Activated CD8-positive, alpha-beta T cell treated with anti-CD3 and anti-CD28 coated beads for 36 hours (primary cell): ENCODE measurements at regions of chr15 and their contacts with region 1.

Region 1: GRCh38 chr15:76973362-76973743 is 21.6 kb upstream of the PSTPIP1 start:
- DNase-seq: peak; percentile 86
- ATAC-seq: peak; percentile 82
- H3K4me3 Mint-ChIP-seq: no peak overlapping the region
- H3K27ac Mint-ChIP-seq: peak overlapping the region; percentile 36
- H3K4me1 Mint-ChIP-seq: peaks cover 24% of the 10 kb centered on the region
- H3K27me3 Mint-ChIP-seq: no peaks in the 10 kb centered on the region
- CTCF ChIP-seq: peak; percentile 90

Region 2: GRCh38 chr15:76954744-76955143 is 18.6 kb before region 1 on chr15:
- CTCF ChIA-PET with region 1: interaction called, 17 read pairs
- POLR2A ChIA-PET with region 1: interaction called, 3 read pairs
- intact Hi-C with region 1: no loop called
- DNase-seq: no peak
- ATAC-seq: no peak
- H3K4me3 Mint-ChIP-seq: no peak overlapping the region
- H3K27ac Mint-ChIP-seq: no peak overlapping the region
- H3K4me1 Mint-ChIP-seq: peaks cover 9% of the 10 kb centered on the region
- H3K27me3 Mint-ChIP-seq: no peaks in the 10 kb centered on the region
- CTCF ChIP-seq: no peak

Region 3: DNA sequence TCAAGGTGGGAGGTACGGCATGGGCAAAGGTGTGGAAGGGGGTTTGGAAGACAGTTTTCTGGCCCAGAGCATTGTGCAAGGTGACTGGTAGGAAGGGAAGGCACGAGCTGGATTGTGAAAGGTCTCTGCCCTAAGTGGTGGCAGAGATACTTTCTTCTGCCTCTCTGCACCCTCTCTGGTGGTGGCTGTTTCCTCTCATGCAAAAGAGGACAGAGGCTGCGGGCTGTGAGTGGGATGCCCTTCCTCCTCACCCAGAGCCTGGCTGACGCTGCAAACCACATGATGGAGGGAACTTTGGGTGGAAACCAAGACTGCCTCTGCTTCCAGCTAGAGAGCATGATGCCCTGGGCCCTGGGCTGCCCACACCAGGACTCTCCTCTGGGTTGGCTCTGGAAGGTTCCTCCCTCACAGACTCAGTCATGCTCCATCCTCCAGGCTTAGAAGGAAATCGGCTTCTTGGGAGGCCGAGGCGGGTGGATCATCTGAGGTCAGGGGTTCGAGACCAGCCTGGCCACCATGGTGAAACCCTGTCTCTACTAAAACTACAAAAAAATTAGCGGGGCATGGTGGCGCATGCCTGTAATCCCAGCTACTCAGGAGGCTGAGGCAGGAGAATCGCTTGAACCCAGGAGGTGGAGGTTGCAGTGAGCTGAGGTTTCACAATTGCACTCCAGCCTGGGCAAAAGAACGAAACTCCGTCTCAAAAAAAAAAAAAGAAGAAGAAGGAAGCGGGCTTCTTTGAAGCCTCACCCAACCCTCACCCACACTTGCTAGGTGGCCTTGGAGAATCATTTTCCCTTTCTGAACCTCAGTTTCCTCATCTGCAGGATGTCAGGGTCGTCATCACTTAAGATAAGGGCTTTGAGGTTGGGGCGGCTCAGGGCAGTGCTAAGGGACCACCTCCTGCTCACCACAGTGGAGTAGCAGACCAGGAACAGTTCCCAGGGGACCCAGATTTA is 29.9 kb after region 1 on chr15:
- CTCF ChIA-PET with region 1: interaction called, 42 read pairs
- POLR2A ChIA-PET with region 1: interaction called, 4 read pairs
- intact Hi-C with region 1: no loop called
- DNase-seq: peak; percentile 91
- ATAC-seq: peak; percentile 81
- H3K4me3 Mint-ChIP-seq: peak overlapping the region; percentile 59
- H3K27ac Mint-ChIP-seq: peak overlapping the region; percentile 93
- H3K4me1 Mint-ChIP-seq: peaks cover 85% of the 10 kb centered on the region
- H3K27me3 Mint-ChIP-seq: no peaks in the 10 kb centered on the region
- CTCF ChIP-seq: no peak

Region 4: DNA sequence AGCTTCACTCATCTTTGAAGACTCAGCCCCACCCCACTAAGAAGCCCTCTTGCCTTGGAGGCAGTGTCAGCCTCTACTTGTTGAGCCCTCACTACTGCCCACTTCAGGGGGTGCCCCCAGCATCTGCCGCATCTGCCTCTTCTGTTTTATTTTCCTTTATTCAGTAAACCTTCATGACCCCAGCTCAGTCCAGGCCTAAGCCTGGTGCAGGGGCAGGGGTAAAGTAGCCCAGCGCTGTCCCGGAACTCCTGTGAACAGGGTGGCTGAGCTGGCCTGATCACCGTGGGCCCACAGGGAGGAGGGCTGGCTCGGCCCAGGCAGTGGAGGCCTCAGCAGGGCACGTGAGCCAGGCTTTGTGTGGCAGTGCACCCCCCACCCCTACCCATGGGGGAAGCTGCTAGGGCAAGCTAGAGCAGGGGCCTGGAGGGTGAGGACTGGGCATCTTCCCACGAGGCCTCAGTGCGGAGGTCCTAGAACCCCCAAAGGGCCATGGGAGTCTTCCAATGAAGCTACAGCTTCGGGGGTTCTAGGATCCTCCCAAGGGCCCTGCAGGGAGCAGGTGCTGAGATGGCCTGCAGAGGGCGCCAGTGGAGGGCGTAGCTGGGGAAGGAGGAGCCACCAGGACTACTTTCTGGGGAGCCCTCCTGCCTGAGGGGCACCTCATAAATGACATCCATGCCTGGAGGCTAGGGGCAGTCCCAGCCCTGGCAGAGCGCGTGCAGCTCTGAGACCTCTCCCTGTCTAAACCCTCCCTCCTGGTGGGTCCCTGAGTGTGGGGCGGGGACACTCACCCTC is 61.5 kb after region 1 on chr15:
- CTCF ChIA-PET with region 1: interaction called, 51 read pairs
- POLR2A ChIA-PET with region 1: interaction called, 4 read pairs
- intact Hi-C with region 1: no loop called
- DNase-seq: peak; percentile 66
- ATAC-seq: peak; percentile 41
- H3K4me3 Mint-ChIP-seq: no peak overlapping the region
- H3K27ac Mint-ChIP-seq: peak overlapping the region; percentile 20
- H3K4me1 Mint-ChIP-seq: peaks cover 11% of the 10 kb centered on the region
- H3K27me3 Mint-ChIP-seq: no peaks in the 10 kb centered on the region
- CTCF ChIP-seq: peak; percentile 66

Region 5: DNA sequence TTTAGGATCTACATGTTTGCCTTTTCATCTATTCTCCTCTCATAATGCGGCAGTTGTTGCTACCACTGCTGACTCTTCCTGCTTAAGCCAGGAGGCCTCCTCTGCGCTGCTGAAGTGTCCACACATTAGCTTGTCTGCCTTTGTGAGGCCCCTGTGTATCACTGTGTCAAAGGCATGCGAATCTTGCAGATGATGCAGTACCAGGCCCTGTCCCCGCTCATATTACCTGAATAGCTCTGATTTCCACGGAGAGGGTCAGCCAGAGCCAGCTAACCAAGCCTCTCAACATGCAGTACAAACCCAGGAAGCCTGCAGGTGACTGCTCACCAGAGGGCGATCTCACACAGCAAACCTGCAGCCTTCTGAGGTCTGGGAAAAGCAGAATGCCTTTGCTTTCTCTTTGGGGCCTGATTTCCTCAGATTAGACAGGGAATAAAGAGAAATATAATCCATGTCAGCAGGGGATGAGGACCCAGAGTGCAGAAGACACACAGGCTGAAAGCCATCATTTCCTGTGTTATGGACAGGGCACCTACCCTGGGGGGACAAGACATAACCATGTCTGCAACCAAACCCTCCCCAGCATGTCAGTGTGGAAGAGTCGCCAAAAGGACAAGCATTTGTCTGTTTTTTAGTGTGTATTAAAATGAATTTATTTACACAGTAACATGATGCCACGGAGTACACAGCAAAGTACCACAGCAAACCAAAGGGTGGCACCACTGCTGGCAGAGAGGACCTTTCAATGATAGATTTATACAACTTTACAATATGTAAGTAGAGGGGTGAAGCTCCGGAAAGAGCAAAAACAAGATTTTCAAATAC is 134.4 kb after region 1 on chr15:
- CTCF ChIA-PET with region 1: interaction called, 12 read pairs
- POLR2A ChIA-PET with region 1: no interaction called
- intact Hi-C with region 1: no loop called
- DNase-seq: peak; percentile 65
- ATAC-seq: peak; percentile 65
- H3K4me3 Mint-ChIP-seq: no peak overlapping the region
- H3K27ac Mint-ChIP-seq: no peak overlapping the region
- H3K4me1 Mint-ChIP-seq: no peaks in the 10 kb centered on the region
- H3K27me3 Mint-ChIP-seq: no peaks in the 10 kb centered on the region
- CTCF ChIP-seq: peak; percentile 65

Region 6: GRCh38 chr15:77219841-77220240 is 246.5 kb after region 1 on chr15:
- CTCF ChIA-PET with region 1: no interaction called
- POLR2A ChIA-PET with region 1: no interaction called
- intact Hi-C with region 1: no loop called
- DNase-seq: no peak
- ATAC-seq: no peak
- H3K4me3 Mint-ChIP-seq: no peak overlapping the region
- H3K27ac Mint-ChIP-seq: no peak overlapping the region
- H3K4me1 Mint-ChIP-seq: peaks cover 10% of the 10 kb centered on the region
- H3K27me3 Mint-ChIP-seq: no peaks in the 10 kb centered on the region
- CTCF ChIP-seq: no peak

Region 7: DNA sequence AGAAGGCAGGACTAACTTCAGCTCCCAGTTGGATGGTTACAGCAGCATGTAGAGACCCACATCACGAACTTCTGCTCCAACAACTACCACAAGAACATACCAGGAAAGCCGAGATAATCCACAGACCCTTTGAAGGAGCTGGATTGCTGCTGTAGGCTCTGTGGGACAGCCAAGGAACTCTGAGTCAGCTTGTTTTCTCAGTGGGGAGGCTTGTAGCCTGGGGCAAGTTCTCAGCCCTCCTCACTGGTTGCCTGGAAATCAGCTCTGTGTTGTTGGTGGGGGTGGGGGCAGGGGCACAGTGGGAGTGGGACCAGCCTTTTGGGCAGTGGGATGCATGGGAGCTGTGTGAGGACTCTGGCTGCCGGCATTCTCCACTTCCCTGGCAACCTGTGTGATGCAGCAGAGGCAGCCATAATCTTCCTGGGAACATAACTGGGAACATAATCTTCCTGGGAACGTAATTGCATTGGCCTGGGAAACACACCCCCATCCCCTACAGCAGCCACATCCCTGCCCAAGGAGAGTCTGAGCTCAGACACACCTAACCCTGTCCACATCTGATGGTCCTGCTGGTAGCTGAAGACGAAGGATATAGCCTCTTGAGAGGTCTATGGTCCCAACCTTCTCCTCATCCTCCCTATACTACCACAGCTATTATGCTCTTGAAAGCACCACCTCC is 293.5 kb after region 1 on chr15:
- CTCF ChIA-PET with region 1: no interaction called
- POLR2A ChIA-PET with region 1: no interaction called
- intact Hi-C with region 1: no loop called
- DNase-seq: no peak
- ATAC-seq: no peak
- H3K4me3 Mint-ChIP-seq: no peak overlapping the region
- H3K27ac Mint-ChIP-seq: no peak overlapping the region
- H3K4me1 Mint-ChIP-seq: no peaks in the 10 kb centered on the region
- H3K27me3 Mint-ChIP-seq: no peaks in the 10 kb centered on the region
- CTCF ChIP-seq: no peak

Region 8: GRCh38 chr15:77543159-77543882 is 570.0 kb after region 1 on chr15:
- CTCF ChIA-PET with region 1: interaction called, 16 read pairs
- POLR2A ChIA-PET with region 1: no interaction called
- intact Hi-C with region 1: no loop called
- DNase-seq: peak; percentile 84
- ATAC-seq: peak; percentile 94
- H3K4me3 Mint-ChIP-seq: peak overlapping the region; percentile 74
- H3K27ac Mint-ChIP-seq: peak overlapping the region; percentile 69
- H3K4me1 Mint-ChIP-seq: peaks cover 7% of the 10 kb centered on the region
- H3K27me3 Mint-ChIP-seq: peaks cover 3% of the 10 kb centered on the region
- CTCF ChIP-seq: peak; percentile 98